Right ventricle myocardium inferior (tissue), 1 donor: ENCODE measurements at regions of chr3 and their contacts with region 1.

Region 1: DNA sequence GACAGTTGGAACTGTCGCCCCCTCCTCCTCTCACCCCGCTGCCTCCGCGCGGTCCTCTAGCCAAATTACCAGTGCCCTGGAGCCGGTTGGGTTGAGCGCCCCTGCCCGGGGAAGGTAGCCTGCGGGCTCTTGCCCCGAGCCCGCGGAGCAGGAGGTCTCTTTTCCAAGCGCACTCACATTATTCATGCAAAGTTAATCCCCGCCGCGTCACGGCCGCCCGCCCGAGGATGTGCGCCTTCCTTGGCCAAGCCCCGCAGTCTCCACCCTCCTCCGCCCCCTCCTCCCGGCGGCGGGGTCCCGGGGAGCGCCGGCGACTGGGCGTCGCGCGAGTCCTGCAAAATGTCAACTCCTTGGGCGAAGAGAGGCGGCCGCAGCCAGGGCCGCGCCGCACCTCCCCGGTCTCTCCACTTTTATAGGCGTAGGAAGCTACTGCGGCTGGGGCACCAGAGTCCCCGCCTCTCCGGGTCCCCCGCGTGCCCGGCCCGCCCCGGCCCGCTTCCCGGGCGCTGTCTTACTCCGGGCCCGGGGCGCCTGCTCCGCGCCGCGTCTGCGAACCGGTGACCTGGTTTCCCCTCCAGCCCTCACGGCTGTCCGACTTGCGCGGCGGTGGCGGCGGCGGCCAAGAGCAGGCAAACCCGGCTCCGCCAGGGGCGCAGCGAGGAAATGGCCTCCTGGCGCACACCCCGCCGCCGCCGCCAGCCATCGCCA is at the start of gene THRB:
- DNase-seq: peak; percentile 89
- ATAC-seq: peak; percentile 71
- total RNA-seq, gene THRB: 25.9 TPM

Region 2: DNA sequence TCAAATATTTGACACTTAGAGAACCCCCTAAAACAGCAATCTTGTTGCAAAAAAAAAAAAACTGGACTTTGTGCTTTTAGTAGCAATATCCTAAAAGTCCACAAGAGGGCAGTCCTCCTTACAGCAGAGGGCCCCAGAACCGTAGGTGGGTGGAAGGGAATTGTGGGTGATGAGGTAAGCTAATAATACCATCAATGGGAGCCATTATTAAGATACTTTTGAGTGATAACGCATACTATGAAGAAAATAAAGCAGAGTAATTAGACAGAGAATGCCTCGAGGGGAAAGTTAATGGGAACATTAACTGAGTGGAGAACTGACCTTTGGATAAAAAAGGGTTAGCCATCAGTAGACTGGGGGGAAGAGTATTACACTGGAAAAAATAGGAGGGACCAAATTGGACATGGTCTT is 230.0 kb before region 1 on chr3:
- intact Hi-C with region 1: loop called (anchors 5 kb)
- DNase-seq: no peak
- ATAC-seq: no peak

Region 3: DNA sequence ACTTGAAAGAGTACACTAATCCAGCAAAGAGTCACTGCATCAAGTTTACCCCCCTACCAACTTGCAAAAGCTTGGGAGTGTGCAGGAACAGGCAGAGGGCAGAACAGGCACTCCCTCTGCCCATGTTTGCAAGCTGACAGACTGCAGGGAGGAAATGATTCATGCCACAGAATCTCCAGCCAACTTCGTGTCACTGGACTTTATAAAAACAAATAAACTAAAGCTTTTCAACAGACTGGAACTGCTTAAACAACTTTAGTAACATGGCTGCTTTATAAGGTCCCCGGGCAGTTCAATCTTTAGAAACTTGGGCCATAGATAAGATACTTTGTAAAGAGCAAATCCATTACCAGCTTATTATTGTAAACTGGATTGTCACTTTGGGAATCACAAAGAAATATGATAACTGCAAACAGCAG is 129.6 kb before region 1 on chr3:
- intact Hi-C with region 1: loop called (anchors 2 kb)
- DNase-seq: no peak
- ATAC-seq: peak; percentile 75

Region 4: GRCh38 chr3:24446032-24446431 is 48.7 kb before region 1 on chr3:
- intact Hi-C with region 1: loop called (anchors 5 kb)
- DNase-seq: no peak
- ATAC-seq: no peak

Region 5: GRCh38 chr3:24582431-24583403 is 87.9 kb after region 1 on chr3:
- intact Hi-C with region 1: loop called (anchors 5 kb)
- DNase-seq: no peak
- ATAC-seq: peak; percentile 60